Activated T-helper 2 cell treated with anti-CD3 and anti-CD28 coated beads, Interferon-gamma antibody, Interleukin-2, Interleukin-4, amounts not matched to agents 10 μg/mL and 5 μg/mL and 100 μg/mL, durations not matched to agents 14 hours and 24 hours and 36 hours (primary cell): ENCODE measurements at regions of chr9 and their contacts with region 1.

Region 1: GRCh38 chr9:137578518-137579258 is at the start of gene DPH7:
- DNase-seq: peak; percentile 91
- H3K4me3 Mint-ChIP-seq: peak within 1 kb of the TSS; percentile 84
- H3K27ac Mint-ChIP-seq: peak within 1 kb of the TSS; percentile 42
- H3K4me1 Mint-ChIP-seq: peaks cover 18% of the 10 kb centered on the region
- H3K27me3 Mint-ChIP-seq: no peaks in the 10 kb centered on the region
- total RNA-seq, gene DPH7: 43.2 and 46.2 TPM in 2 replicates

Region 2: GRCh38 chr9:137383081-137383889 is 195.4 kb before region 1 on chr9:
- intact Hi-C with region 1: no loop called
- DNase-seq: no peak
- H3K4me3 Mint-ChIP-seq: no peak overlapping the region
- H3K27ac Mint-ChIP-seq: no peak overlapping the region
- H3K4me1 Mint-ChIP-seq: peaks cover 1% of the 10 kb centered on the region
- H3K27me3 Mint-ChIP-seq: no peaks in the 10 kb centered on the region

Region 3: GRCh38 chr9:137551651-137552384 is 26.9 kb before region 1 on chr9 and contains the start of gene MRPL41:
- intact Hi-C with region 1: loop called (anchors 2 kb)
- DNase-seq: peak; percentile 90
- H3K4me3 Mint-ChIP-seq: peak within 1 kb of the TSS; percentile 90
- H3K27ac Mint-ChIP-seq: peak within 1 kb of the TSS; percentile 69
- H3K4me1 Mint-ChIP-seq: peaks cover 8% of the 10 kb centered on the region
- H3K27me3 Mint-ChIP-seq: no peaks in the 10 kb centered on the region
- total RNA-seq, gene MRPL41: 43.2 and 49.4 TPM in 2 replicates

Region 4: GRCh38 chr9:137618105-137619067 is 39.7 kb after region 1 on chr9 and contains the start of gene EHMT1:
- intact Hi-C with region 1: loop called (anchors 5 kb)
- DNase-seq: peak; percentile 89
- H3K4me3 Mint-ChIP-seq: peak within 1 kb of the TSS; percentile 87
- H3K27ac Mint-ChIP-seq: peak within 1 kb of the TSS; percentile 87
- H3K4me1 Mint-ChIP-seq: peaks cover 21% of the 10 kb centered on the region
- H3K27me3 Mint-ChIP-seq: no peaks in the 10 kb centered on the region
- total RNA-seq, gene EHMT1: 96.5 and 103 TPM in 2 replicates